GM10248 (cell line): ENCODE measurements at regions of chr7 and their contacts with region 1.

Region 1: GRCh38 chr7:129468087-129468486 is 33.9 kb downstream of the STRIP2 start:
- DNase-seq: no peak
- CTCF ChIP-seq: no peak

Region 2: DNA sequence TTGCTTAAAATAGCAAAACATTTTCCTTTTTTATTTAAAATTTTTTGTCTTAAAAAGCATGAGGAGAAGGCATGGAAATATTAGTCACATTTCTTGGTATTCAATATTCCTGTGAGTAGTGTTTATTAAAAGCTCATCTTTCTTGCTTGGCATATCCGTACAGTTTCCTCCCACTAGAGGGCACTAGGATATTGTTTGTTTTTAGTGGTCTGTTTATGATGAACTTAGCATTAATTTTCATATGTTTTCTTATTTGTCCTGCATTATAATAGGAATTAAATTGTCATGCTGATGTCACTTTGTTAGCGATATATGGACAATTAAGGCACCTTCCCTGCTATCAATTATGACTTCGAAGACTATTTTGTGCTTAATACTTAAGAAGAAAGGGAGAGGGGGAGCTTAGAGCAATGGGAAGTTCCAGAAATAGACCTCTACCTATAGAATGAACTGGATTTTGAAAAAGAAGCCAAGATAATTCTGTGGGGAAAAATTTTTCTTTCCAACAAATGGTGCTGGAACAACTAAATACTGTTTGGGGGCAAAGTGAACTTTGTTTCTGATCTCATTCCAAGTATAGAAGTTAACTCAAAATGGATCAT is 124.9 kb before region 1 on chr7:
- CTCF ChIA-PET with region 1: interaction called, 28 read pairs
- POLR2A ChIA-PET with region 1: interaction called, 4 read pairs
- DNase-seq: peak; percentile 44
- CTCF ChIP-seq: peak; percentile 70

Region 3: DNA sequence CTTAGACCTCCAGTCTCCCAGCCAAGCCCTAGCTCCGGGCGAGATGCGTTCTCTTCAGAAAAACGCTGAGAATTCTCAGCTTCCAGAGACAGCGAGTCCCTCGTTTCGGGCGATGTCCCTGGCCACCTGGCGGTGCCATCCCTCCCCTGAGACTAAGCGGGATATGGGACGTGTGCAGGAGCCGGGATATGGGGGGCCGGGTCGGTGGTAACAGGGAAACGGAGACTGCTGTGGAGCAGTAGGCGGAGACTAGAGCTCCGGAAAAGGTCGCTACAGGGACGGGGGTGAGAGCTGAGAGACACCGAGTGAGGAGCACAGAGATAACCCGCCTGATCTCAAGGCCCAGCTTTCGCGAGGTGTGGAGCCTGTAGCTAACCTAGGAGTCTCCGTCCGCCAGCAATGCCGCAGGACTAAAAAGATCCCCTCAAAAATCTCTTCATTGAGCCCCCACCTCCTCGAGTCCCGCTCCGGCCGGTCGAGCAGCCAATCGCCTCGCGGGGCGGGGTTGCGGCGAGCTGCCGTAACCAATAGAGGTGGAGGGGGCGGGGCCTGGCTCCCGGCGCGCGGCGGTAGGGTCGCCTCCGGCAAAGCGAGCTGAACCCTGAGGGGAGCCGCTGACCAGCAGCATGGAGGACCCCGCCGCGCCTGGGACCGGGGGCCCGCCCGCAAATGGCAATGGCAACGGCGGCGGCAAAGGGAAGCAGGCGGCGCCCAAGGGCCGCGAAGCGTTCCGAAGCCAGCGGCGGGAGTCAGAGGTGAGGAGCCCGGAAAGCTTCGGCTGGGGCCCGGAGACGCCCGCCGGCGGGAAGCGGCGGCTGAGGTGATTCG is 34.0 kb before region 1 on chr7 and contains the start of gene STRIP2:
- CTCF ChIA-PET with region 1: interaction called, 10 read pairs
- POLR2A ChIA-PET with region 1: no interaction called
- DNase-seq: peak; percentile 94
- CTCF ChIP-seq: no peak

Region 4: GRCh38 chr7:129454249-129454551 is 13.9 kb before region 1 on chr7:
- CTCF ChIA-PET with region 1: interaction called, 10 read pairs
- POLR2A ChIA-PET with region 1: no interaction called
- DNase-seq: no peak
- CTCF ChIP-seq: no peak

Region 5: GRCh38 chr7:129480674-129481365 is 12.7 kb after region 1 on chr7:
- CTCF ChIA-PET with region 1: interaction called, 12 read pairs
- POLR2A ChIA-PET with region 1: no interaction called
- DNase-seq: no peak
- CTCF ChIP-seq: no peak